A673 (cell line): ENCODE measurements at regions of chr4 and their contacts with region 1.

Region 1: DNA sequence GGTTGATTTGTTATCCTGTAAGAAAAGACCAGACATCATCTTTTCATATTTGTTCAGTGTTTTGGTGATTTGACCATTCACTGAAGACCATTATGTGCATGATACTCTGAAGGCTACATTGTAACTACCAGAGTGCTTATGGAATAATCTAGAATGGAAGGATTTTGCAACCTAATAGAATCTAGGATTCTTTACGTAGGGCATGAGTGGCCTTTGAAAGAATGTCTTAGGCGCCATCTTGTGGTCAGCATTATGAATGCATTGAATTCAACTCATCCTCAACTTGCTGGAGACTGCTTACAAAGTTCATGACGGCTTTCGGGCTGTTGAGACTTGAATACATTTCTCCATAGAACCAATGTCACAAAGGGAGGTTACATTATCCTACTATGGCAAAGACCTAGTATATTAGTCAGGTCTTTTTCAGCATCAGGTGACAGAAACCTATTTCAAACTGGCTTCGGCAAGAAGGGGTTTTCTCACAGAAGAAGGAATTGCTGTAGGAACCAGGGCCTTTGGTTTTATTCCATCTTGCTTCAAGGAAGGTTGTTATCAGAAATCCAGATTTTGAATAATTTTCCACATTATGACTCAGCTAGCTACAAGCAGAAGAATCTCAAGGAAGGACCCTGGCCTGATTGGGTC is 104.1 kb downstream of the GPAT3 start:
- DNase-seq: peak; percentile 69
- H3K4me3 ChIP-seq: no peak overlapping the region
- H3K27ac ChIP-seq: no peak overlapping the region
- H3K4me1 ChIP-seq: peaks cover 15% of the 10 kb centered on the region
- H3K27me3 ChIP-seq: no peaks in the 10 kb centered on the region
- CTCF ChIP-seq: peak; percentile 67

Region 2: DNA sequence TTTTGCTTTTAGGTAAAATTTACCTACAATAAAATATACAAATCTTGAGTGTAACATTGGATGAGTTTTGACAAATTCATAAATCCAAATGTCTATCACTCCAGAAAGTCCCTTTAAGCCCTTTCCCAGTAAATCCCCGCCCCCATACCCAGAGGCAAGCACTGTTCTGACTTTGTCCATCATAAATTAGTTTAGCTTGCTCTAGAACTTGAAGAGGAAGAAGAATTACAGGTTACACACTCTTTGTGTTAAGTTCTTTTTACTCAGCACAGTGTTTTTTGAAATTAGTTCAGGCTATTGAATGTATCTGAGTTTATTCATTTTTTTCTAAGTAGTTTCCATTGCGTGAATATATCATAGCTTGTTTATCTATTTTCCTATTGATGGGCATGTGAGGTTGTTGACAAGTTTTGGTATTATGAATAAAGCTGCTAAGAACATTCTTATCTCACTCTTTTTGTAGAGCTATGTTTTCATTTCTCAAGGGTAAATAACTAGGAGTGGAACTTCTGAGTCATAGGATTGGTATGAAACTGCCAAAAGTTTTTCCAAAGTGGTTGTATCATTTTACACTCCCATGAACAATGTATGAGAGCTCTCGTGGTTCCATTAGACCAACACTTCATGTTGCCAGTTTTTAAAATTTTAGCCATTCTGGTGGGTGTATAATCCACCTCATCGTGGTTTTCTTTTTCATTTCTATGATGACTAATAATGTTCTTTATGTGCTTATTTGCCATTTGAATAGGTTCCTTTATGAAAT is 282.9 kb before region 1 on chr4:
- CTCF ChIA-PET with region 1: no interaction called
- POLR2A ChIA-PET with region 1: no interaction called
- intact Hi-C with region 1: loop called (anchors 10 kb)
- DNase-seq: peak; percentile 43
- H3K4me3 ChIP-seq: no peak overlapping the region
- H3K27ac ChIP-seq: no peak overlapping the region
- H3K4me1 ChIP-seq: no peaks in the 10 kb centered on the region
- H3K27me3 ChIP-seq: no peaks in the 10 kb centered on the region
- CTCF ChIP-seq: no peak

Region 3: DNA sequence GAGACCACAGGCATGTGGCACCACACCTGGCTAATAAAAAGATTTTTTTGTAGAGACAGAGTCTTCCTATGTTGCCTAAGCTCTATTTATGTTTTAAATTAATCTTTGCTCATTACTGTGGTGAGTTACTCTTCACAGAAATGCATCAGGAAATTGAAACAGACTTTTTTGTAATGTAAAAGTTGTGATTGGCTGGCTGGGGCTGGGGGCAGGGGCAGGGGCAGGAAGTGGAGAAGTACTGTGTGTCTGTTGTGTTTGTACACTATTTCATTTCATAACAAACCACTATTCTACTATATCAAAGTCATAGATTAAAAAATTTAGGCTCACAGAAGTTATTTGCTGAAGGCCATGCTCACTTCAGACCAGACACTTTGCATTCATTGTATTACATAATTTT is 136.0 kb before region 1 on chr4:
- CTCF ChIA-PET with region 1: no interaction called
- POLR2A ChIA-PET with region 1: no interaction called
- intact Hi-C with region 1: loop called (anchors 1 kb)
- DNase-seq: no peak
- H3K4me3 ChIP-seq: no peak overlapping the region
- H3K27ac ChIP-seq: no peak overlapping the region
- H3K4me1 ChIP-seq: no peaks in the 10 kb centered on the region
- H3K27me3 ChIP-seq: no peaks in the 10 kb centered on the region
- CTCF ChIP-seq: no peak

Region 4: GRCh38 chr4:83723609-83724008 is 83.6 kb after region 1 on chr4:
- CTCF ChIA-PET with region 1: no interaction called
- POLR2A ChIA-PET with region 1: interaction called, 5 read pairs
- intact Hi-C with region 1: loop called (anchors 1 kb)
- DNase-seq: no peak
- H3K4me3 ChIP-seq: peak overlapping the region; percentile 7
- H3K27ac ChIP-seq: peak overlapping the region; percentile 97
- H3K4me1 ChIP-seq: peaks cover 45% of the 10 kb centered on the region
- H3K27me3 ChIP-seq: no peaks in the 10 kb centered on the region
- CTCF ChIP-seq: no peak

Region 5: DNA sequence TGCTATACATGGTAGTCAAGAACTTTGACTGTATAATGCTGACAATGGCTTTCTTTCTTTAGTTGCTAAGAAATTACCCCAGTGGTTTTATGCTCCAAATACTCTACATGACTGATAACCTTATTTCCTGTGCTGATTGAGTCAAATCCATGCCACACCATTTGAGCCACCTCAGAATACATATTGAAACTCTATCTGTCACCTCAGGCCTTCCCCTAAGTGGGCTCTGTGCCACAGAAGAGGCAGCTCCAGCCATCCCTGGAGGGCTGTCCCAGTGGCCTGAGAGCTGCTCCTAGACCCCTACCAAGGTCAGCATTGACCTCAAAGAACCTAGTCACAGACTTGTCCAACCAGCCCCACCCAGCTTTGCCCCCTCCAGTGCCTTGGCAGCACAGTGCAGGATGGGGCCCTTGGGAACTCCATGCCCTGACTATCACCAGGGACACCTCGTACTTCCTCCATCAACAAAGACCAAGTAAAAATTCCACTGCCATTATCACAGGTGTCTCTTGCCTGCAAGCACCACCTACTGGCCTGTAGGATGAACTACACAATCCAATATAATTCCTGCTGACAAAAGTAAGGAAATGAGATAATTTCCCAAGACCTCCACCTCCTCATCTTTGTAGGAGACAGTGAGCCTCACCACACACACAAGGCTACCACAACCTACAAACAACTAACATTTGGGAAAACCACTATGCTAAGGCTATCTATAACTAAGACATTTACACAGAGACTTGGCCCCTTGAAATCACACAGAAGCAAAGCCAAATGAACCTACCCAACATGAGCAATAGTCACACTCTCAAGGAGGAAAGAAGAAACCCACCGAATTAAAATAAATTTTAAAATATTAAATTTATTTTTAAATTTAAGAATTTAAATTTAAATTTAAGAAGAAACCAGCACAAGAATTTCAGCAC is 619.2 kb after region 1 on chr4:
- CTCF ChIA-PET with region 1: no interaction called
- POLR2A ChIA-PET with region 1: no interaction called
- intact Hi-C with region 1: loop called (anchors 5 kb)
- DNase-seq: peak; percentile 24
- H3K4me3 ChIP-seq: no peak overlapping the region
- H3K27ac ChIP-seq: no peak overlapping the region
- H3K4me1 ChIP-seq: no peaks in the 10 kb centered on the region
- H3K27me3 ChIP-seq: no peaks in the 10 kb centered on the region
- CTCF ChIP-seq: peak; percentile 57

Region 6: GRCh38 chr4:84503495-84504437 is 863.8 kb after region 1 on chr4:
- CTCF ChIA-PET with region 1: interaction called, 6 read pairs
- POLR2A ChIA-PET with region 1: no interaction called
- intact Hi-C with region 1: loop called (anchors 2 kb)
- DNase-seq: peak; percentile 70
- H3K4me3 ChIP-seq: no peak overlapping the region
- H3K27ac ChIP-seq: no peak overlapping the region
- H3K4me1 ChIP-seq: no peaks in the 10 kb centered on the region
- H3K27me3 ChIP-seq: no peaks in the 10 kb centered on the region
- CTCF ChIP-seq: peak; percentile 65